ENCODE measurements at regions of chr9 and their contacts with region 1.

Region 1: DNA sequence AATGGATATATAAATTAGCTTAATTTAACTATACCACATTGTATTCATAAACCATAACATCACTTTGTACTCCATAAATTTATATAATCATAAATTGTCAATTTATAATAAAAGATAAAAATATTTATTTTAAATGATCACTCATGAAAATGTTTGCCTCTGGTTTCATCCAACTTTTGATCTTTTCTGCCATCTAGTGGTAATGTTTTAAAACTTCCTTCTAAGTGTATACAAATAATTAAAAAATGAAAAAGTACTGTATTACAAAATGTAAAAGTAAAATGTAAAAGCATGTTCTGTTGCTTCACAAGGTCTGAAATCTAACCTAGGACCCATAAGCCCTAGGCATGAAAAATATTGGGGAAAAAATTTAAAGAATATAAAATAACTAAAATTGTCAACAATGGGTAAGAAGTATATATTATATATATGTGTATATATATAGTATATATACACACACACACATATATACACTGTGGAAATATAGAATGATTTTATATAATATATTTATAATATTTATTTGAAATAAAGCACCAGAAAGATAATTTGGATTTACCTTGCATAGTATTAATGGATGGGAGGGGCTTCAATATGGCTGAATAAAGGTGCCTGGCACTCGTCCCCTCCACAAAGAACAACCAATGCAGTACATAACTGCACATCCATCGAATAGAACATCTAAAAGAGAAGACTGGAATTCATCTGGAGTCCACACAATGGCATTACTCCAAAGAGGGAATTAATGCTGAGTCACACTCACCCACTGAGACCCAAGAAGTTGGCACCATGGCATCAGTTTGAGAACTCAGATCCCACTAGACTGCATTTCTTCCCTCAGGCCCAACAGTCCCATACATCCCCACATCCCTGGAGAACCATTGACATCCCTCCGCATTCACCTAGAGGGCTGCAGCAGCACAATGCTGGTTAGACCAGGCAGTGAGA is 32.5 kb downstream of the ANXA1 start:
- DNase-seq: peak; percentile 59
- H3K4me3 Mint-ChIP-seq: no peak overlapping the region
- H3K27ac Mint-ChIP-seq: no peak overlapping the region
- H3K4me1 Mint-ChIP-seq: no peaks in the 10 kb centered on the region
- H3K27me3 Mint-ChIP-seq: peaks cover 42% of the 10 kb centered on the region
- CTCF ChIP-seq: peak; percentile 48

Region 2: GRCh38 chr9:72871685-72872084 is 312.5 kb before region 1 on chr9:
- CTCF ChIA-PET with region 1: interaction called, 5 read pairs
- POLR2A ChIA-PET with region 1: no interaction called
- intact Hi-C with region 1: loop called (anchors 2 kb)
- DNase-seq: peak; percentile 43
- H3K4me3 Mint-ChIP-seq: no peak overlapping the region
- H3K27ac Mint-ChIP-seq: no peak overlapping the region
- H3K4me1 Mint-ChIP-seq: no peaks in the 10 kb centered on the region
- H3K27me3 Mint-ChIP-seq: peaks cover 22% of the 10 kb centered on the region
- CTCF ChIP-seq: peak; percentile 61

Region 3: DNA sequence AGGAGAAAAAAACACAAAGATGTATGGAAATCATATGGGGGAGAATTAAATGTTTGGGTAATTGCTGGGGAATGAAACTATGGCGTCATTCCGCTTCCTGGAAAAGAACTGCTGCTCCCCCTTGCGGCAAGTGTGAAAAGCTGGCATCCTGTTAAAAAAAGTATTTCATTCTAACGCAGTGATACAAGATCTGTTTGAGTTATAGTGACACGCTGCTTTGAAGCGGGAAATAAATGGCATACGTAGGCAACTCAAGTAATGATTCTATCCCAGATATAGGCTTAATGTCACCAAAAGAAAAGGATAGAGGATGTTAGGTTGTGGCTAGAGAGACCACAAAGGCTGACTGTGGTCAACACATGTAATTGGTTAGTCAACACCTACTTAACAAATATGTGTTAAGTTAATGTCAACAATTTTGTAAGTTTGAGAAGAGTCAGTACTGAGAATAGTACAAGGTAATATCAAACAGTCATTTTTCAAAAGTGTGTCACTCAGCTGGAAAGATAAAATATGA is 161.1 kb before region 1 on chr9:
- CTCF ChIA-PET with region 1: interaction called, 3 read pairs
- POLR2A ChIA-PET with region 1: no interaction called
- intact Hi-C with region 1: loop called (anchors 5 kb)
- DNase-seq: peak; percentile 81
- H3K4me3 Mint-ChIP-seq: no peak overlapping the region
- H3K27ac Mint-ChIP-seq: no peak overlapping the region
- H3K4me1 Mint-ChIP-seq: no peaks in the 10 kb centered on the region
- H3K27me3 Mint-ChIP-seq: peaks cover 72% of the 10 kb centered on the region
- CTCF ChIP-seq: peak; percentile 78

Region 4: GRCh38 chr9:73081979-73082657 is 102.1 kb before region 1 on chr9:
- CTCF ChIA-PET with region 1: interaction called, 99 read pairs
- POLR2A ChIA-PET with region 1: no interaction called
- intact Hi-C with region 1: loop called (anchors 1 kb)
- DNase-seq: peak; percentile 53
- H3K4me3 Mint-ChIP-seq: no peak overlapping the region
- H3K27ac Mint-ChIP-seq: no peak overlapping the region
- H3K4me1 Mint-ChIP-seq: no peaks in the 10 kb centered on the region
- H3K27me3 Mint-ChIP-seq: peaks cover 71% of the 10 kb centered on the region
- CTCF ChIP-seq: peak; percentile 54

Region 5: GRCh38 chr9:73104342-73104741 is 79.8 kb before region 1 on chr9:
- CTCF ChIA-PET with region 1: interaction called, 78 read pairs
- POLR2A ChIA-PET with region 1: interaction called, 5 read pairs
- intact Hi-C with region 1: loop called (anchors 1 kb)
- DNase-seq: no peak
- H3K4me3 Mint-ChIP-seq: no peak overlapping the region
- H3K27ac Mint-ChIP-seq: no peak overlapping the region
- H3K4me1 Mint-ChIP-seq: peaks cover 7% of the 10 kb centered on the region
- H3K27me3 Mint-ChIP-seq: no peaks in the 10 kb centered on the region
- CTCF ChIP-seq: no peak

Region 6: DNA sequence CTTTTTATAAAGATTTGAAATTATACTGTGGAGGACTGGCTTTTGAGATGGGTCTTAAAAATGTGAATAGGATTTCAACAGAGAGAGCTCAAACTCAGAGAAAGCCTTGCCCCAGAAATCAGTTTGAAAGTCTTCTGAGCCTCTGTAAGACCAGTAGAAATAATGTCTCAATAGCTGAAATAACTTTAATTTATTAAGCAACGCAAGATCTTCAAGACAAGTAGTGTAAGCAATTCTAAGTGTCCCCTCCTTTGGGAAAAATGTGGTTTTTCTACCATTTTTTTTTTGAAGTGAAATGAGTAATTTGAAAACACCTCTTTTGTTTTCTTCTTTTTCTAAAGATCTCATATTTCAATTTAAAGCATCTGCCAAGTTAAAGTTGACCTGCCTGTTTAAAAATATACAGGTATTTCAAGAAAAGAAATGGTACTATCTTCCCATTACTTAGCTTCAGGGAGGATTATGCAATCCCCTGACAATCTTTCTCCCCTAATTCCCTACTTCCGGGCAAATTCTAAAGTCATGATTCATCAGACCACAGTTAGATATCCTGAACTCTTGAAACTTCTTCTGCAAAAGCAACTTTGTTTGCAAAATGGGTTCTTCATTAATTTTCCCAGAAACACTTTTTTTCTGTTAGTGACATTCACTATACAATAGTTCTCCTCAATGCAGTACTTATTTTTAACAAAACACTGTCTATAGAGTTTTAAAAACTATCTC is 40.4 kb before region 1 on chr9:
- CTCF ChIA-PET with region 1: no interaction called
- POLR2A ChIA-PET with region 1: no interaction called
- intact Hi-C with region 1: no loop called
- DNase-seq: peak; percentile 93
- H3K4me3 Mint-ChIP-seq: no peak overlapping the region
- H3K27ac Mint-ChIP-seq: peak overlapping the region; percentile 32
- H3K4me1 Mint-ChIP-seq: peaks cover 43% of the 10 kb centered on the region
- H3K27me3 Mint-ChIP-seq: no peaks in the 10 kb centered on the region
- CTCF ChIP-seq: no peak

Region 7: DNA sequence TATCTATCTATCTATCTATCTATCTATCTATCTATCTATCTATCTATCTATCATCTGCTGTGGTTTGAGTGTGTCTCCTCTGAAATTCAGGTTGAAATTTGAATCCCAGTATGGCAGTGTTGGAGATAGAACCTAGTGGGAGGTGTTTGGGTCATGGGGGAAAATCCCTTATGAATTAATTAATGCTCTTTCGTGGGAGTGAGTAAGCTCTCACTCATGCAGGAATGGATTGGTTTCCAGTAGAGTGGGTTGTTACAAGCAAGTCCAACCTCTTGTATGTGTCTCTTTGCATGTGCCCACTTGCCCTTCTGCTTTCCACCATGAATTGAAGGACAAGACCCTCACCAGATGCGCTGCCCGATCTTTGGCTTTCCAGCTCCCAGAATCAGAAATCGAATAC is 80.4 kb after region 1 on chr9:
- CTCF ChIA-PET with region 1: no interaction called
- POLR2A ChIA-PET with region 1: no interaction called
- intact Hi-C with region 1: no loop called
- DNase-seq: no peak
- H3K4me3 Mint-ChIP-seq: no peak overlapping the region
- H3K27ac Mint-ChIP-seq: no peak overlapping the region
- H3K4me1 Mint-ChIP-seq: no peaks in the 10 kb centered on the region
- H3K27me3 Mint-ChIP-seq: peaks cover 42% of the 10 kb centered on the region
- CTCF ChIP-seq: no peak

Region 8: DNA sequence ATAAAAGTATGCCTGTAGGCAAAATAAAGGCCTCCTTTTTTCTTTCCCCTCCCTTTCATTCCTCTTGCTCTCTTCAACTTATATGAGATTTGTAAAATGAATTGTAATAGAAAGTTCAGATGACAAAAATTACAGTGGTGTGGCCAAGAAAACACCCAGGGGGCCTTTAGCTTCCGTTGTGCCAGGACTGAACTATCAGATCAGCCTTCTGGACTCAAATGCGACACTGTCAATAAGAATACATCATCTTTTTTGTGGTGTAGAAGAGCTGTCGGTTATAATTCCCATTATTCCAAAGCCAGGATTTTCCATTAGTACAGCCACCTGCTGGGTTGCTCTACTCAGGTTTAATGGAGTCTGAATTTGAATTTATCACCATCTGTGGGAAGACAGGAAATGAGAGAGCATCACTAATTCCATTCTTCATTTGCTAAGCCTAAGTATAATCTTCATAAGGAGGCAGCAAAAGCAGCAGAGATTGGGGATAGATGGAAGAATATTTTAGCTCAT is 410.9 kb after region 1 on chr9:
- CTCF ChIA-PET with region 1: no interaction called
- POLR2A ChIA-PET with region 1: no interaction called
- intact Hi-C with region 1: no loop called
- DNase-seq: no peak
- H3K4me3 Mint-ChIP-seq: no peak overlapping the region
- H3K27ac Mint-ChIP-seq: no peak overlapping the region
- H3K4me1 Mint-ChIP-seq: no peaks in the 10 kb centered on the region
- H3K27me3 Mint-ChIP-seq: peaks cover 74% of the 10 kb centered on the region
- CTCF ChIP-seq: no peak

Measured in MCF 10A (cell line).